Activated CD4-positive, alpha-beta memory T cell treated with anti-CD3 and anti-CD28 coated beads for 36 hours (primary cell): ENCODE measurements at regions of chr1 and their contacts with region 1.

Region 1: GRCh38 chr1:158107916-158108315 is 72.8 kb upstream of the CD1D start:
- DNase-seq: no peak
- H3K4me3 Mint-ChIP-seq: no peak overlapping the region
- H3K27ac Mint-ChIP-seq: no peak overlapping the region
- H3K4me1 Mint-ChIP-seq: peaks cover 2% of the 10 kb centered on the region
- H3K27me3 Mint-ChIP-seq: peaks cover 21% of the 10 kb centered on the region

Region 2: DNA sequence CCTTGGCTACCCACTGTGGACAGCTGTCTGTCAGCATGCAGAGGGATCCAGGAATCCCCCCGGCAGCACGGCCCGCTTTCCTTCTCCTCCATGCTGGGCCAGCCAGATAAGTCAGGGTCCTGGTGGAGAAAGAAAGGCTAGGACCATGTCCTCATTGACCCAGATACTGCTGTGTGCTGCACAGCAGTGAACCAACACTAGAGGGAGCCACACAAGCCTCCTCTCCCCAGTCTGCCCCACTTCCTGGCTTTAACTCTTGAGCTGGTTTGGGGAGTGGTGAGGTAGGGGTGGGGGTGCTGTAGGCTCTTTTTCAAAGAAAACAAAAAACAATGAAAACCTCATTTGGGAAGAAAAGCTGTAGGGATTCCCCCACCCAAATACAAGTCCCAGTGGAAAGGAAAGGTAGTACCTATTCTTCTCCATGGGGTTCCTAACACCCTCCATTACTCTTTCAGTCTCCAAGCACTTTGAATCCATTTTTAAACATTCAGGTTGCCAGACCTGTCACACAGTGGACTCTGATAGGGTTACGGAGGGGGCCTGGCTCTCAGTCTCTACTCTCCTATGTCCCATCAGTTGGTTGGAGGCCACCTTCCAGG is 12.1 kb before region 1 on chr1:
- CTCF ChIA-PET with region 1: interaction called, 16 read pairs
- POLR2A ChIA-PET with region 1: no interaction called
- intact Hi-C with region 1: no loop called
- DNase-seq: peak; percentile 47
- H3K4me3 Mint-ChIP-seq: no peak overlapping the region
- H3K27ac Mint-ChIP-seq: no peak overlapping the region
- H3K4me1 Mint-ChIP-seq: no peaks in the 10 kb centered on the region
- H3K27me3 Mint-ChIP-seq: no peaks in the 10 kb centered on the region

Region 3: DNA sequence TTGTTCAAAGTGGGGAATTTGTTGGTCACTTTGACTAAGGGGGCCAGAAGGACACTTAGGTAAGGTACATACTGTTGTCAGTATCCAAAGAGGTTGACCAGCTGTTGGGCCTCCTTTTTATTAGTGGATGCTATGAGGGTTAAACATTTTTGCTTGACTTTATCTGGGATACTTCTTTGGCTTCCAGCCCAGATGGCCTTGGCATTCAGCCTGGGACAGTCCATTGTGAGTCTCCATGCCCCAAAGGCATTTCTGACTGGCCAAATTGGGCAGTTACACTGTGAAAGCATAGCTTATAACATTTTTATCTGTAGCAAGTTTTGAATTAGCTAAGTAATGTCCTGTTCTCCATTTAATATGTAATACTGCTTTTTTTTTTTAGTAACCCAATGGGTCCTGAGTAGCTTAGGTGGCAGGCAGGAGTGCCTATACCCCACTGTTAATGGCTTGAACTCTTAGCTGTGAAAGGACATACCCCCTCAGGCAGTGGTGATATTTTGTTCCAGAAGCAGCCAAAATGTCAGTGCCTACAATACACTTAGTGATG is 37.3 kb after region 1 on chr1:
- CTCF ChIA-PET with region 1: no interaction called
- POLR2A ChIA-PET with region 1: no interaction called
- intact Hi-C with region 1: no loop called
- DNase-seq: no peak
- H3K4me3 Mint-ChIP-seq: no peak overlapping the region
- H3K27ac Mint-ChIP-seq: no peak overlapping the region
- H3K4me1 Mint-ChIP-seq: peaks cover 16% of the 10 kb centered on the region
- H3K27me3 Mint-ChIP-seq: no peaks in the 10 kb centered on the region